GM12878 (cell line): ENCODE measurements at regions of chr2 and their contacts with region 1.

Region 1: GRCh38 chr2:70907130-70908057 is 28.3 kb upstream of the ATP6V1B1 start:
- DNase-seq: no peak
- ATAC-seq: no peak
- H3K4me3 ChIP-seq: no peak overlapping the region
- H3K27ac ChIP-seq: no peak overlapping the region
- H3K4me1 ChIP-seq: no peaks in the 10 kb centered on the region
- H3K27me3 ChIP-seq: peaks cover 13 to 42% of the 10 kb centered on the region in 2 experiments
- CTCF ChIP-seq: no peak
- EP300 ChIP-seq: no peak
- POLR2A ChIP-seq: no peak
- RAD21 ChIP-seq: no peak

Region 2: GRCh38 chr2:70919672-70920366 is 12.4 kb after region 1 on chr2:
- CTCF ChIA-PET with region 1: interaction called, 13 read pairs
- POLR2A ChIA-PET with region 1: no interaction called
- RAD21 ChIA-PET with region 1: no interaction called
- SMC1A ChIA-PET with region 1: no interaction called
- in situ Hi-C with region 1: no loop called
- intact Hi-C with region 1: no loop called
- DNase-seq: no peak
- ATAC-seq: peak; percentile 92
- H3K4me3 ChIP-seq: no peak overlapping the region
- H3K27ac ChIP-seq: no peak overlapping the region
- H3K4me1 ChIP-seq: no peaks in the 10 kb centered on the region
- H3K27me3 ChIP-seq: peaks cover 0 to 3% of the 10 kb centered on the region in 2 experiments; a peak in 2 of 4 replicates
- CTCF ChIP-seq: peak; percentile 85 to 90 (median 88)
- EP300 ChIP-seq: no peak
- POLR2A ChIP-seq: no peak
- RAD21 ChIP-seq: peak; percentile 71